Left ventricle myocardium inferior (tissue), 1 donor: ENCODE measurements at regions of chr11 and their contacts with region 1.

Region 1: DNA sequence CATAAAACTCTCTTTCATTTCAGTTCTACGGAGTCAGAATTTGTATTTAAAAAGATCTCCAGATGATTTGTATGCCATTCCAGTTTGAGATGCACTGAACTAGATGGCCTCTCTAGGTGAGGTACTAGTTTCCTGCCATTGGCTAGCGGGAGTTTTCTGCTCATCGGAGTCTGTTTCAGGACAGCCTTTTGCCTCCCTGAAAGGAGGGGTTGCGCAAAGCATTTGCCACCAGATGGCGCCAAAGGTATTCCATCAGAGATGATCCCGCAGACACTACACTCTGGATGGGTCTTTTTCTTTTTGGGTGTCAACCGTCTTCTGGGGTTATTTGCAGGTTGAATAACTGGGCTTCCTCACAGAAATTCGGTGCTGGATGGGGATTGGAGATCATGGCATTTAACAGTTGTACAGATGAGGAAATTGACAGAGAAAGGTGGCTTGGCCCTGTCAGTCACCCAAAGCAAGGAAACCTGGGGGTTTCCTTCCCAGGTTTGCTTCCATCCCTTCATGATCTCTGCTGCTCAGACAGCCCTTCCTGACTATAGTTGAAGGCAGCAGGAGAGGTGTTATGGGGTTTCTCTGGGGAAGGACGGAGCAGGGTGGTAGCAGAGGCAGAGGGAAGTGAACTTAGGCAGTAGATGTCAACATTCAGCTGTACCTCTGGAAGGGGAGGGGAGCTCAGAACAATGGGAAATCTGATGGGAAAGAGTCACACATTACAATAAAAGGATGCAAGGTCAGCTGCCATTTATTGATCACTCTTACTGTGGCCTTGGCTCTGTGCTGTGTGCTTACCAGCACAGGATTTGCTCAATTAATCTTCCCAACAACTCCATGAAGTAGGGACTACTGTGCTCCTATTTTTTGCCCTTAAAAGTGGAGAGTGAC is 81.6 kb downstream of the CCDC81 start:
- DNase-seq: peak; percentile 82
- H3K4me3 ChIP-seq: no peak overlapping the region
- H3K27ac ChIP-seq: peak overlapping the region; percentile 38
- H3K4me1 ChIP-seq: peaks cover 52% of the 10 kb centered on the region
- H3K27me3 ChIP-seq: no peaks in the 10 kb centered on the region
- CTCF ChIP-seq: peak; percentile 93

Region 2: DNA sequence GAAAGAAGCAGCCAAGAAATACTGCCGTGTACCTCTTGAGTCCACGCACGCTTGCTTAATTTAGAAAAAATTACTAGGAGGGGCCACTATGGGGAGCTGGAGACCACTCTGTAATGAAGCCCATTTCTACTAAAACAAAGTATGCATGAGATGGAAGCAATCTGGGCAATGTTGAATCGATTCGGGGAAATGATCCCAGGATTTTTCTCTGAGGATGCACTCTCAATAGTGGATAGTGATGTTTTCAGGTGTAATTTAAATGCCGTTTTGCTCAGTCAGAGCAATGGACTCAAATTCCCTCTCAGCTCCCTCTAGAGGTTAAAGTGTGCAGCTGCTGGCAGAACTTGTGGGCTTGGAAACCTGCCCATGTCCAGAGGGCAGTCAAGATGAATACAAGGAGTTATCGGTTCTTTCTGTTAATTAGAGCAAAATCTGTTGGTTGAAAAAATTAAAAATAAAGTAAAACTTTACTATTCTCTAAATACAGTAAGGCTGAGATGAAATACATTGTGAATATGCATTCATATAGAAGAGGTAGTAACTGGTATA is 152.0 kb after region 1 on chr11:
- intact Hi-C with region 1: loop called (anchors 10 kb)
- DNase-seq: peak; percentile 55
- H3K4me3 ChIP-seq: peak overlapping the region; percentile 20
- H3K27ac ChIP-seq: peak overlapping the region; percentile 35
- H3K4me1 ChIP-seq: peaks cover 47% of the 10 kb centered on the region
- H3K27me3 ChIP-seq: no peaks in the 10 kb centered on the region
- CTCF ChIP-seq: peak; percentile 97

Region 3: GRCh38 chr11:86802601-86803051 is 346.3 kb after region 1 on chr11:
- intact Hi-C with region 1: loop called (anchors 5 kb)
- DNase-seq: no peak
- H3K4me3 ChIP-seq: peak overlapping the region; percentile 82
- H3K27ac ChIP-seq: no peak overlapping the region
- H3K4me1 ChIP-seq: peaks cover 38% of the 10 kb centered on the region
- H3K27me3 ChIP-seq: no peaks in the 10 kb centered on the region
- CTCF ChIP-seq: peak; percentile 74

Region 4: DNA sequence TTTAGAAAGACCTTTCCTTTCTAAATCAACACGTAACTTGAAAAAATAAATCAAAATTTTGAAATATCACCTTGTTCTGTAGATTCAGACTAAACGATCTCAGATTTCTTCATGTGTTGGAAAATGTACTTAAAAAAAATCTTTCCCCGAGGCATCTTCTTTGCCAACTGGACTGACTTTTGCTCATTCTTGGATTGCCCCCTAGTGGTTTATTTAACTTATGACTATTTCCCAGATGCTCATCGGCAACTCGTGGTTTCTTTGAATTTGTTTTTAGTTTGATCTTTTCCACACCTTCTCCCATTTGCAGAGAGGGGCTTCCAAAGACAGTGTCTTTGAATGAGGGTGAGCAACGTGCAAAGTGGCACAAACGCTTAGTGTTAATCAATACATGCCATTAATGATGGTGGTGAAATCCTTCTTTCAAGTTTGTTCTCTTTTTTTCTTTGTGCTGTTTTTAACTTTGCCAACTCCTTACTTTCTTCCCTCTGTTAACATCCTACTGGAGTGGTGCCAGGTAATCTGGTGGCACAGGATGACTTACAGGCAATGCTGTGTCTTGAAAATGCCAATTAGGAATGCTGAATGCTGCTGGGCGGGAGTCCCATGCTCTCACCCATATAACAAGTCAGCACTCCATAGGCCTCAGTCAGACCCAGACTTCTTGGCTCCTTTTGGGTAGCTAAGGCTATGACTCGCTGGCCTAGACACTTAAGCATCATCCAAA is 362.3 kb after region 1 on chr11:
- intact Hi-C with region 1: loop called (anchors 5 kb)
- DNase-seq: no peak
- H3K4me3 ChIP-seq: no peak overlapping the region
- H3K27ac ChIP-seq: no peak overlapping the region
- H3K4me1 ChIP-seq: peaks cover 32% of the 10 kb centered on the region
- H3K27me3 ChIP-seq: no peaks in the 10 kb centered on the region
- CTCF ChIP-seq: peak; percentile 81